MCF 10A (cell line): ENCODE measurements at regions of chr16 and their contacts with region 1.

Region 1: GRCh38 chr16:88743693-88744576 is 37.6 kb downstream of the CTU2 start:
- DNase-seq: peak; percentile 64
- H3K4me3 Mint-ChIP-seq: no peak overlapping the region
- H3K27ac Mint-ChIP-seq: no peak overlapping the region
- H3K4me1 Mint-ChIP-seq: no peaks in the 10 kb centered on the region
- H3K27me3 Mint-ChIP-seq: no peaks in the 10 kb centered on the region
- CTCF ChIP-seq: peak; percentile 80

Region 2: DNA sequence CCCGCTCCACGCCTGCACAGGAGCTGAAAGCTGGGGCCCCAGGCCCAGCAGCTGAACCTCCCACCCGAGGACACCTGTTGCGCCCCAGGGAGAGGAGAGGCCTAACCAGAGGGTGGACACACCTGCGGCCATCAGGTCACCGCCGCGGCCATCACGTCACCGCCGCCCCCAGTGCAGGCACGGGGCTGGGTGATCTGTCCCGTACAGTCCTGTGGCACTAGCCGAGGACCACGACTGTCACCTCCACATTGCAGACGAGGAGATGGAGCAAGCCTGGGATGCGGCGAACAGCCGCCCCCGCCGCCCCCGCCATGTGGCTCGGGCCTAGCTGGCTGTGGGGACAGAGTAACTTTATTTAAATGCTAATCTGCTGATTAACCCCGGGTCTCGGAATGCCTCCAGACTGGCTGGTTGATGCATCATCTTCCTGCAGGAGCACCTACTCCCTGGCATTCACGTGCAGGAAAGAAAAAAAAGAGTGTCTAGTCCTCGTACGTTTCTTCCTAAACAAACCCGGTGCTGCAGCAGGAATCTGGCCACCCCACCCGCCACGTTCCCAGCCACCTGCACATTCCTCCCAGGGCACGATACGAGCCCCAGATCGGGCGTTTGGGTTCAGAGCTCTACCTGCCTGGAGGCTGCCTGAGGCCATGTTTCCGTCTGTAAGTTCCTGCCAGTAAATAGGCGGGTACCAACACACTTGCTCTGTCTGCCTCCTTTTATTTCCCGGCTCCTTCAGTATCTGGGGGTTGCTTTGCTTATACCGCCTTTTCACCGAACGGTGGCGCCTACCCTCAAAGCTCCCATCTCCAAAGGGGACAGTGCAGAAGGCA is 11.2 kb after region 1 on chr16:
- CTCF ChIA-PET with region 1: interaction called, 19 read pairs
- POLR2A ChIA-PET with region 1: no interaction called
- intact Hi-C with region 1: no loop called
- DNase-seq: peak; percentile 75
- H3K4me3 Mint-ChIP-seq: peak overlapping the region; percentile 36
- H3K27ac Mint-ChIP-seq: peak overlapping the region; percentile 23
- H3K4me1 Mint-ChIP-seq: peaks cover 8% of the 10 kb centered on the region
- H3K27me3 Mint-ChIP-seq: no peaks in the 10 kb centered on the region
- CTCF ChIP-seq: no peak

Region 3: DNA sequence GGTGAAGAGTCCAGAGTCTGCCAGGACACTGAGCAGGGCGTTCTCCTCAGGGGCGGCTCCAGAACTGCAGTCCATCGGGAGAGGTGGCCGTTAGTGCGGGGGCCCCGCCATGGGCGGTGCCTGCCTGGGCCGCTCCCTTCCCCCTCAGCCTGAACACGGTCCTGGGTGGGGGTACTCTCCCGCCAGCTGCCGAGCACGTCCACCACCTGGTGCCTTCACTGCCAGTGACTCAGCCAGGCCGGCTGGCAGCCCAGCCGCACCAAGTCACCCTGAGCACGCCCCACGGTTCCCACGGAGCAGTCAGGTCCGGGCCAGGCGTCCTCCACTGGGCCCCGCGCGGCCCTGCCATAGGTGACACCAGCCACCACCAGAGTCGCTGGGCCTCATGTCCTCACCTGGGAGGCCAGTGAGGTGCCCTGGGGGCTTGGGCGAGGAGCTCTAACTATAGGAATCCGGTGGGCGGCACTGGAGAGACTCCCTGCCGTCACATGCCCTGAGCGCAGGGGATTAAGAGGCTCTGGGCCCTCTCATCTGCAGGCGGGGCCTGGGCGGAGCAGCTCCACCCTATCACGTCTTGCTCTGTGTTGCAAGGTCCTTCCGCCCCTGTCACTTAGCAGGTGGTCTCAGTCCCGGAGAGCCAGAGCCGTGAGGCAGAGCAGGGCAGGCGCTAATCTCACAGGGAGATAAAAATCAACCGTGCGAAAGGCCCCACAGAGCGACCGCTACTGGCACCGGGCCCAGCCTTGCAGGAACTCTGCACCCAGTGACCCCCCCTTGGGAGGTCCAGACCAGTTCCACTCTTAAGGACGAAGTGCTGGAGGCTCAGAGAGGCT is 26.7 kb after region 1 on chr16:
- CTCF ChIA-PET with region 1: interaction called, 10 read pairs
- POLR2A ChIA-PET with region 1: no interaction called
- intact Hi-C with region 1: no loop called
- DNase-seq: peak; percentile 82
- H3K4me3 Mint-ChIP-seq: peak overlapping the region; percentile 57
- H3K27ac Mint-ChIP-seq: peak overlapping the region; percentile 61
- H3K4me1 Mint-ChIP-seq: peaks cover 32% of the 10 kb centered on the region
- H3K27me3 Mint-ChIP-seq: no peaks in the 10 kb centered on the region
- CTCF ChIP-seq: no peak